ENCODE measurements at regions of chr17 and their contacts with region 1.

Region 1: DNA sequence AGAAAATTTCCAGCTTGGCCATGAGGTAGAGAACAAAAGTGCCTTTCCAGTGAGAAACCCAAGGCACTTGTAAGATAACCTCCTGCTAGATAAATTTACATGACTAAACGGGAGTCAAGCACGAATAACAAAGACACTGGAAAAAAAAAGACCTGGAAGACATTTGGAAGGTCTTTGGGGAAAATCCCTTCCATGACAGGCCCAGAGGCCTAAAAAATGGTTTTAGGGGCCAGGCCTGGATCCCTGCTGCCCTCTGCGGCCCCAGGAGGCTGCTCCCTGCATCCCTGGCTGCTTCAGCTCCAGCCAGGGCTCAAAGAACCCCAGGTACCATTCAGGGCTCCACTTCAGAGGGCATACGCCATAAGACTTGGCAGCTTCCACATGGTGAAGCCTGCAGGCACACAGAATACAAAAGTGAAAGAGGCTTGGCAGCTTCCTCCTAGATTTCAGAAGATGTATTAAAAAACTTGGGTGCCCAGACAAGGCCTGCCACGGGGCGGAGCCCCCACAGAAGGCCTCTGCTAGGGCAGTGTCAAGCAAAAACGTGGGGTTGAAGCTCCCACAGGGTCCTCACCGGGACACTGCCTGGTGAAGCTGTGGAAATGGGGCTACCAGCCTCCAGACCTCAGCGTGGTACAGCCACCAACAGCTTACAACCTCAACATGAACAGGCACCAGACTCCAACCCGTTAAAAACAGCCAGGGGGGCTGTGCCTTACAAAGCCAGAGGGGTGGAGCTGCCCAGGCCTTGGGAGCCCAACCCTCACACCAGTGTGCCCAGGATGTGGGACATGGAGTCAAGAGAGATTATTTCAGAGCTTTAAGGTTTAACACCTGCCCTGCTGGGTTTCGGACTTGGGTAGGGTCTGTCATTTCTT is 77.1 kb downstream of the SDK2 start:
- DNase-seq: peak in 7 of 10 donors; percentile 11 to 65 (median 33)
- ATAC-seq: peak; percentile 86 to 92
- H3K4me3 Mint-ChIP-seq: peak overlapping the region; percentile 26 to 71 (median 54)
- H3K27ac Mint-ChIP-seq: peak overlapping the region; percentile 84 to 96 (median 93)
- H3K4me1 Mint-ChIP-seq: peaks cover 5 to 38% (median 27%) of the 10 kb centered on the region in 4 donors
- H3K27me3 Mint-ChIP-seq: no peaks in the 10 kb centered on the region

Region 2: GRCh38 chr17:73535746-73536145 is 31.4 kb before region 1 on chr17:
- POLR2A ChIA-PET with region 1: no interaction called
- DNase-seq: no peak
- ATAC-seq: no peak
- H3K4me3 Mint-ChIP-seq: peak overlapping the region in 1 of 10 donors; percentile 8
- H3K27ac Mint-ChIP-seq: peak overlapping the region in 2 of 10 donors; percentile 3 to 62
- H3K4me1 Mint-ChIP-seq: peaks cover 0 to 29% (median 9%) of the 10 kb centered on the region in 4 donors
- H3K27me3 Mint-ChIP-seq: no peaks in the 10 kb centered on the region

Region 3: DNA sequence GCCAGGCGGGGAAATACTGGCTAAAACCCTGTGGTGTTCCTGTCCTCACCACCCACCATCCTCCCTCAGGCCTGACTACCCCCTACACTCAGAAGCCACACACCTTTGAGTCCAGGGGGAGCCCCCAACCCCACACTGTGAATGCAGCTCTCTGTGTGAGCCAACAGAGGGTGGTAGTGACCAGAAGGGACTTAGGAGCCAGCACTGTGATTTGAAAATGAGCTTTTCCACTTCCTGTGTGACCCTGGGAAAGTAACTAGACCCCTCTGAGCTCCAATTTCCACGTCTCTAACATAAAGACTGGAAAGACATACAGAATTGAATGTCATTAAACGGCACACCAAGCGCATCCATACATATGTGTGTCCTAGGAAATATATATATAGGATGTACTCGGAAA is 18.4 kb after region 1 on chr17:
- POLR2A ChIA-PET with region 1: interaction called, 58 read pairs
- DNase-seq: peak in 2 of 10 donors; percentile 28
- ATAC-seq: peak; percentile 60 to 69
- H3K4me3 Mint-ChIP-seq: no peak overlapping the region
- H3K27ac Mint-ChIP-seq: peak overlapping the region in 5 of 10 donors; percentile 28 to 82 (median 56)
- H3K4me1 Mint-ChIP-seq: peaks cover 17 to 69% (median 57%) of the 10 kb centered on the region in 4 donors
- H3K27me3 Mint-ChIP-seq: no peaks in the 10 kb centered on the region

Measured in naive thymus-derived CD8-positive, alpha-beta T cell (primary cell).